Posterior cingulate gyrus (tissue), 11 donors: ENCODE measurements at regions of chr3 and their contacts with region 1.

Region 1: GRCh38 chr3:187319699-187320302 is 28.3 kb upstream of the MASP1 start:
- DNase-seq: peak; percentile 33 to 90 (median 71)

Region 2: GRCh38 chr3:187679638-187680396 is 360.0 kb after region 1 on chr3:
- intact Hi-C with region 1: loop called (anchors 1 kb)
- DNase-seq: peak; percentile 42 to 94 (median 79)

Region 3: GRCh38 chr3:187714404-187714979 is 394.7 kb after region 1 on chr3:
- intact Hi-C with region 1: loop called (anchors 1 kb)
- DNase-seq: peak in 8 of 10 donors; percentile 46 to 87 (median 76)